Dorsolateral prefrontal cortex (tissue), 120 donors: ENCODE measurements at regions of chr12 and their contacts with region 1.

Region 1: GRCh38 chr12:109518820-109519665 is 41.6 kb downstream of the UBE3B start:
- DNase-seq: peak in 9 of 10 donors; percentile 52 to 93 (median 75)
- H3K4me3 ChIP-seq: no peak overlapping the region
- H3K27ac ChIP-seq: peak overlapping the region in 54 of 59 donors; percentile 2 to 85 (median 65)
- H3K27me3 ChIP-seq: no peaks in the 10 kb centered on the region
- CTCF ChIP-seq: peak; percentile 76 to 95 (median 86)

Region 2: GRCh38 chr12:109329689-109330088 is 189.4 kb before region 1 on chr12:
- intact Hi-C with region 1: no loop called
- DNase-seq: no peak
- H3K4me3 ChIP-seq: no peak overlapping the region
- H3K27ac ChIP-seq: no peak overlapping the region
- H3K27me3 ChIP-seq: no peaks in the 10 kb centered on the region
- CTCF ChIP-seq: no peak

Region 3: GRCh38 chr12:109553483-109553882 is 34.4 kb after region 1 on chr12:
- intact Hi-C with region 1: no loop called
- DNase-seq: no peak
- H3K4me3 ChIP-seq: no peak overlapping the region
- H3K27ac ChIP-seq: no peak overlapping the region
- H3K27me3 ChIP-seq: peaks cover 0 to 16% (median 0%) of the 10 kb centered on the region in 45 donors
- CTCF ChIP-seq: no peak

Region 4: GRCh38 chr12:109573029-109573913 is 54.2 kb after region 1 on chr12 and contains the starts of genes MMAB and MVK:
- intact Hi-C with region 1: loop called (anchors 5 kb)
- DNase-seq: peak; percentile 97 to 100 (median 99)
- H3K4me3 ChIP-seq: peak within 1 kb of the TSS; percentile 63 to 99 (median 87)
- H3K27ac ChIP-seq: peak within 1 kb of the TSS; percentile 46 to 96 (median 87)
- H3K27me3 ChIP-seq: no peaks in the 10 kb centered on the region
- CTCF ChIP-seq: peak in 25 of 56 donors; percentile 3 to 50 (median 18)
- total RNA-seq, gene MMAB: 17.6 to 53.8 (median 31.3) TPM
- total RNA-seq, gene MVK: 11.9 to 45.9 (median 24.6) TPM

Region 5: DNA sequence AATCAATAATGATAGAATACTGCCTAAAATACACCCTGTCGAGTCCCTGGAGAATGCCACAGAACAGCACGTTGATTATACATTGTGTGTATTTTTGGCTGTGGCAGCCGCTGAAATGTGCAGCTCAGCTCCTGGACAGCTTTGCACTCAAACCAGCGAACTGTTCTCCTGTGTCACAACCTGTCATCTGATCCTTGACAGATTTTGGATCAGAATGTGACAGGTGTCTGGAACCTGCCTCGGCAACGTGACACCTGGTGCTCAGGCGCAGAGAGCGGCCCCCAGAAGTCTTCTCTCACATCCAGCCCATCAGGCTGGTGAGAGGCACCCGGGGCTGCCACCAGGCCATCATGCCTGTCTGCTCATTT is 73.8 kb after region 1 on chr12:
- intact Hi-C with region 1: loop called in 1 of 2 experiments (anchors 5 kb)
- DNase-seq: no peak
- H3K4me3 ChIP-seq: no peak overlapping the region
- H3K27ac ChIP-seq: peak overlapping the region in 3 of 59 donors; percentile 8 to 44 (median 8)
- H3K27me3 ChIP-seq: no peaks in the 10 kb centered on the region
- CTCF ChIP-seq: no peak